ENCODE measurements at regions of chr11 and their contacts with region 1.

Region 1: GRCh38 chr11:122633219-122633829 is 22.2 kb upstream of the UBASH3B start:
- DNase-seq: no peak
- ATAC-seq: peak; percentile 72

Region 2: GRCh38 chr11:122253589-122254231 is 379.6 kb before region 1 on chr11:
- intact Hi-C with region 1: no loop called
- DNase-seq: no peak
- ATAC-seq: peak; percentile 83

Region 3: DNA sequence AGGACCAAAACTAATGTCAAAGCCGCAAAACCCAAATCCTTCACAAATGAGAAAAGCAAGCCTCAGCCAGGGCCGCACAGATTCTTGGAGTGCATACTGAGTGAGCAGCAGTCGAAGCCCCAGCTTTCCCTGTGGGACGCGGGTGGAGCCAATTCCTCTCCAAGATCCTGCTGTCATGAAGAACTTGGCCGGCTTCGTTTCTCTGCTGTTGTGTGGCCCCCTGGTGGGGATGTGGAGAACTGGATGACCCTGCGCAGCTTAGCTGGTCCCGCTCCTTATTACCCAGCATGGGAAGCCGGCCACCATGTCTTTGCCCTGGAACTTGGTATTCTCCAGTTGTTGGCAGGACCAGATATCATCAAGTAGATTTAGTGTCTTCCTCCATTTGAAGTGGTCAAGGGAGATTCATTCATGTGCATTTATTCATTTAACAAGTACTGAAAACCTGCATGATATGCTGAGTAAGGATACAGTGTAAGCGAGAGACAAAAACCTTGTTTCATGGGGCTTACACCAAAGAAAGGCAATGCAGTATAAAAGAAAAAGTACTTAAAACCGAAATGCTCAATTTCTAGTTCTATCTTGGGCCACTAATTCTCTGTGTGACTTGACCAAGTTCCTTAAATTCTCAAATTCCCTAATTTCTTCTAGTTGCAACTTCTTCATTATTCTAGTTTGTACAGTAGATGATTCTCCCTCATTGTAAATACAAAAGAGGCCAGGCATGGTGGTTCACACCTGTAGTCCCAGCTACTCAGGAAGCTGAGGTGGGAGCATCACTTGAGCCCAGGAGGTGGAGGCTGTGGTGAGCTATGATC is 148.3 kb after region 1 on chr11:
- intact Hi-C with region 1: loop called (anchors 5 kb)
- DNase-seq: peak; percentile 93
- ATAC-seq: peak; percentile 88

Measured in sciatic nerve (tissue), 2 donors.